PC-9 (cell line): ENCODE measurements at regions of chr16 and their contacts with region 1.

Region 1: DNA sequence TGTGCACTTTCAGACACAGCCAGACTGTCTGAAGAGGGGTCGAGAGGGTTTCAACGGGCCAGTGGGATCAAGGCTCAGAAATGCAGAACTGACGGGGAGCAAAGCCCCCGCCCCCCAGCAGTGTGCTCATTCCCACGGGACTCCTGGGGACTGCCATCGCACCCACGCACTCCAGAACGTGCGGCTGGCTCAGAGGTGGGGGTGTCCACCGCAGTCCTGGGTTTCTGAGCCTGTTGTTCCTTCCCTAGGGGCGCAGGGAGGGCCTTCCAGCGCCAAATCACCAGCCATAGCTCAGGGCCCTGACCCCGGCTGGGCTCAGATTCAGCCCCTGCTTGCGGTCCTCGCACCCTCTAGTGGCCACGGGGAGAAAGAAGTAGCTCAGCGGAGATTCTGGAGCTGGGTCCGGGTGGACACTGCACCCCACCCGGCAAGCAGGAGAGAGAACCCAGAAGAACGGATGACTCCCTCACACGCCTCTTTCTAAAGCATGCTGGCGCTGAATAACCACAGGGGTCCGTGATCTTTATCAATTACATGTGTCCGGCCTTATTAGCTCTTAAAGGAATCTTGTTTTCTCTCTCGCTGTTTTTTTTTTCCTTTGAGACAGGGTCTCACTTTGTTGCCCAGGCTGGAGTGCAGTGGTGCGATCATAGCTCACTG is 45.0 kb upstream of the USP7 start:
- DNase-seq: peak in 1 of 2 experiments; percentile 72
- H3K4me3 ChIP-seq: no peak overlapping the region; the same call in 1 of the 2 replicates
- H3K27ac ChIP-seq: no peak overlapping the region
- H3K4me1 ChIP-seq: peaks cover 4% of the 10 kb centered on the region
- H3K27me3 ChIP-seq: no peaks in the 10 kb centered on the region
- CTCF ChIP-seq: peak; percentile 86

Region 2: DNA sequence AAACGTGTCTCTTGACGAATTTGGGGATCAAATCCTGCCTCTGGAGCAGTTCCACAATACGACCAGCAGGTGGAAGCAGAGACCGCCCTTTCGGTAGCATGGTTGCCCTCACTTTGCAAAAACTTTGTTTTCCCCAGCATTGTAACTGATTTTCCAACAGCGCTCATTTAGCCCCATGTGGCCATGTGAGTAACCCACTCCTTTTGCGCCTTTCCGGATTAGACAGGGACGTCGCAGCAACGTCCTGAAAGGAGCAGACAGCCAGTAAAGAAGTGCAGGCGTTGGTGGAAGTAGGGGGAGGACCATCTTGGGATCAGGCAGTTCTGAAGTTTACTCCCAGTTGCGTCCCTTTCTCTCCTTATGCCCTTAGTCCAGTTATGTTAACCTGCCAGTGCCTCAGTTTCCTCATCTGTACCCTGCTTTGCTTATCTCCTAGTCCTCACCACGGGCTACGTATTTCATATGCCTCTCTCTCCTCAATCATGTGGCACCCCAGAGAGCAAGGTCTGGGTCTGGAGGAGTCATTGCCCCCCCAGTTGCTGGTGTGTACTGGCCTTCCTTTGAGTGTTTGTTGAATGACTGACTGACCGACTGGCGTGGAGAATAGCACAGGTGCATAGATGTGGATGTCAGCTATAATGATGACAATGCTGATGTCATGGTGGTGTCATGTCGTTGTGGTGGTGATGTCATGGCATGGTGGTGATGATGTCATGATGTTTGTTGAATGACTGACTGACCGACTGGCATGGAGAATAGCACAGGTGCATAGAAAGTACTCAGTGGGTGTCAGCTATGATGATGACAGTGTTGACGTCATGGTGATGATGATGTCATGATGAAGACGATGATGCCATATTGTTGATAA is 440.7 kb before region 1 on chr16:
- CTCF ChIA-PET with region 1: interaction called, 3 read pairs
- POLR2A ChIA-PET with region 1: no interaction called
- intact Hi-C with region 1: loop called (anchors 5 kb)
- DNase-seq: peak; percentile 77
- H3K4me3 ChIP-seq: no peak overlapping the region
- H3K27ac ChIP-seq: no peak overlapping the region
- H3K4me1 ChIP-seq: no peaks in the 10 kb centered on the region
- H3K27me3 ChIP-seq: peaks cover 9% of the 10 kb centered on the region; the same call in 1 of the 2 replicates
- CTCF ChIP-seq: peak; percentile 96

Region 3: DNA sequence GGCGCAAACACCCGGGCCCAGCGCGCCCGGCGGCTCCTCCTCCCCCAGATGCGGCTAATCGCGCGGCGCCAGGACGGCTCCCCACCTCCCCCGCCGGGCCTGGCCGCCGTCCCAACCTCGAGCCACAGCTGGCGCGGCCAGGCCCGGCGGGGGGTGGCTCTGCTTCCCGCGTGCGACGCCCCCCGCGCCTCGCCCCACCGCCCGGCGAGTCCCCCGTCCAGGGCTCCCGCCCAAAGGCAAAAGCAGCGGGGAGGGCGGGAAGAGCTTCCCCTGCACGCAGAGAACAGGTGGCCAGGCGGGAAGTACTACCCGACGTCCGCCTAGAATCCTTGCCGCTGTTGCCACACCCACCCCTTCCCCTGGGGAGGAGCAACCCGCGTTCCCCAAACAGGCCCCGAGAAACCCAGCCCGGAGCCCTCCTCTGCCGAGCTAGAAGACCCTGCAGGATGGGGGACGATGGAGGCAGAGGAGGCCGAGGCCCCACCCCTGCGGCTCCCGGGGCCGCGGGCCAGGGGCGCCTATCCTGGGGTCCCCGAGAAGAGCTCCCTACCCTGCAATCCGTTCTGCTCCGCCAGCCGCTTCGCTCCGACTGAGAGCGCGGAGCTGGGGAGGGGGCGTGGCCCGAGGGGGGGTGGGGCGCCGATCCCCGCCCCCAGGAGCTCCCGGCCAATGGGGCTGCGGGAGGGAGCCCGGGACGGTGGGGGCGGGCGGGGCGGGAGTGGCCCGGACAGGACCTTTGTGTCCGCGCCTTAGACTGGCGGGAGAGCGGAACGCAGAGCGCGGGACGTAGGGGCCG is 140.1 kb before region 1 on chr16 and contains the start of gene CARHSP1:
- CTCF ChIA-PET with region 1: interaction called, 14 read pairs
- POLR2A ChIA-PET with region 1: no interaction called
- intact Hi-C with region 1: no loop called
- DNase-seq: peak; percentile 83 to 90
- H3K4me3 ChIP-seq: peak within 1 kb of the TSS; percentile 88
- H3K27ac ChIP-seq: peak within 1 kb of the TSS; percentile 55
- H3K4me1 ChIP-seq: peaks cover 41% of the 10 kb centered on the region
- H3K27me3 ChIP-seq: no peaks in the 10 kb centered on the region
- CTCF ChIP-seq: no peak
- total RNA-seq, gene CARHSP1: 179 and 186 TPM in 2 replicates

Region 4: DNA sequence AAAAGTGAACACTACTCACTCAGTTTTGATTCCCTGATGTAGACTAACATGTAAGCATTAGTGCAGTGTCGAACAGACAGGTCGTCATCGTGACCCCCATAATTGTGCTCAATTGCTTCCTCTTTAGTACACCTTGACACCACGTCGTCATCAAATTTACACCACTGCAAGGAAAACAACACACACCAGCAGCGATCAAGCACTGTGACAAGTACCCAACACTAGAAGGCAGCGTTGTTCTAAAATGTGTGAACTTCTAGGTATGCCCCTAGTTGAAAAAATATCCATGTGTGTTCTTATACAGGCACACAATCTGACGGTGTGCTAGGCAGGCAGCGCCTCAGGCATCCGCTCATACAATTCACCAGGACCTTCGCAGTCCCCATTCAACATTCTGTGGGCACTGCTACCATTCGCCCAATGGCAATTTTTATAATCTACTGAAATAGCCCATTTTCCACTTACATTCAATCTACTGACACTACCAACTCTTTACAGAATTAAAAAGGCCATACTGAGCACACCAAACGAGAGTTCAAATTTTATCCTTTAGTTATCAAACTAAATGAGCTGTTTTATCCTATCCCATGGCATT is 103.5 kb before region 1 on chr16:
- CTCF ChIA-PET with region 1: no interaction called
- POLR2A ChIA-PET with region 1: no interaction called
- intact Hi-C with region 1: loop called (anchors 1 kb)
- DNase-seq: peak; percentile 17 to 48
- H3K4me3 ChIP-seq: no peak overlapping the region
- H3K27ac ChIP-seq: no peak overlapping the region
- H3K4me1 ChIP-seq: peaks cover 15% of the 10 kb centered on the region
- H3K27me3 ChIP-seq: no peaks in the 10 kb centered on the region
- CTCF ChIP-seq: peak; percentile 59

Region 5: GRCh38 chr16:8936421-8936820 is 72.3 kb before region 1 on chr16:
- CTCF ChIA-PET with region 1: interaction called, 23 read pairs
- POLR2A ChIA-PET with region 1: no interaction called
- intact Hi-C with region 1: loop called (anchors 10 kb)
- DNase-seq: peak; percentile 59 to 65
- H3K4me3 ChIP-seq: no peak overlapping the region
- H3K27ac ChIP-seq: peak overlapping the region; percentile 24; the same call in 1 of the 2 replicates
- H3K4me1 ChIP-seq: peaks cover 26% of the 10 kb centered on the region
- H3K27me3 ChIP-seq: no peaks in the 10 kb centered on the region
- CTCF ChIP-seq: peak; percentile 72

Region 6: DNA sequence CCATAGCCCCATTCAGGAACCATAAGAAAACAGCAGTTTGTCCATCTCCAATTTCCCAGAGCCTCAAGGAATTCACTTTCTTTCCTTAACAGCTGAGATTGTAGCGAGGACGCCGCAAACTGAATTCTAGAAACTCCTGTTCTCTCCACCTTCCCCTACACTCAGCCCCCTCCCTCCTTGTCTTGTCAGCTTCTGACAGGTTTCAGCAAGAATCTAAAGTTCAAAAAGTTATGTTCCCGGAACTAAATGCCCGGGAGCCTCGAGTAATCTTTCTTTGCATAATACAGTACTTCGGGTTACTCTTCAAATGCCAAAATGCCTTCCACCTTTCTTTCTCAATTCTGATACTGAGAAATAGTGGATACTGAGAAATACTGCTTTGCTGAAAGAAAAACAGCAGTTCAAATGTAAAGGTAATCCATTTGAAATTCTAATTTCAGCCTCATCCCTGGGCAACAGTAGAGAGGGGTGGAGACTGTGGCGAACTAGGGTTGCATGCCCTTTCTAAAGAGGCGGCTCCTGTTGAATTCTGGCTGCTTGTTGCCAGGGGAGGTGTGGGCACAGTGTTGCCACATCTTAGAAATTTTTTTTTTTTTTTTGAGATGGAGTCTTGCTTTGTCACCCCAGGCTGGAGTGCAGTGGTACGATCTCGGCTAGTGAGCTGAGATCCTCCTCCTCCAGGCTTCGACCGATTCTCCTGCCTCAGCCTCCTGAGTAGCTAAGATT is 18.5 kb after region 1 on chr16:
- CTCF ChIA-PET with region 1: interaction called, 11 read pairs
- POLR2A ChIA-PET with region 1: no interaction called
- intact Hi-C with region 1: no loop called
- DNase-seq: no peak
- H3K4me3 ChIP-seq: no peak overlapping the region
- H3K27ac ChIP-seq: no peak overlapping the region
- H3K4me1 ChIP-seq: no peaks in the 10 kb centered on the region
- H3K27me3 ChIP-seq: no peaks in the 10 kb centered on the region
- CTCF ChIP-seq: no peak

Region 7: GRCh38 chr16:9119795-9120194 is 111.1 kb after region 1 on chr16:
- CTCF ChIA-PET with region 1: no interaction called
- POLR2A ChIA-PET with region 1: no interaction called
- intact Hi-C with region 1: no loop called
- DNase-seq: no peak
- H3K4me3 ChIP-seq: no peak overlapping the region
- H3K27ac ChIP-seq: peak overlapping the region; percentile 11; the same call in 1 of the 2 replicates
- H3K4me1 ChIP-seq: peaks cover 54% of the 10 kb centered on the region
- H3K27me3 ChIP-seq: no peaks in the 10 kb centered on the region
- CTCF ChIP-seq: no peak

Region 8: DNA sequence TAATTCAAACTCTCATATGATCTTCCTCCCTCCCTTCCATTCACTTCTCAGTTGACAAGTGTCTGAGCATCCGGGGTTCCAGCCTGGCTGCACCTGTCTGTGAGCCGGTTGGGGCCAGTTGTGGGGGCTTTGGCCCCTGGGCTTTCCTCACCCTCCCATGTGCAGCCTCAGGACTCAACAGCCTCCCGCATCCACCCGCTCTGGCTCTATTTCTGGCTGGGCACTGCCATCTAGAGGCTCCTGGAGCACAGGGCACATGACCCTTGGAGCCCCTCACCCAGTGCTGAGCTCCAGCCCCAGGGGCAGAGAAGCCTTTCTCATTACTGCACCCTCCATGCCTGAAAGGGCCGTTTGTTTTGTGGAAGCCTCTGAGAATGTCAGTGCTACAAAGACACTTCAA is 126.0 kb after region 1 on chr16:
- CTCF ChIA-PET with region 1: no interaction called
- POLR2A ChIA-PET with region 1: no interaction called
- intact Hi-C with region 1: loop called (anchors 2 kb)
- DNase-seq: peak; percentile 53 to 78
- H3K4me3 ChIP-seq: no peak overlapping the region
- H3K27ac ChIP-seq: no peak overlapping the region
- H3K4me1 ChIP-seq: no peaks in the 10 kb centered on the region
- H3K27me3 ChIP-seq: no peaks in the 10 kb centered on the region
- CTCF ChIP-seq: peak; percentile 78